Gastrocnemius medialis (tissue), 4 donors: ENCODE measurements at regions of chr9 and their contacts with region 1.

Region 1: GRCh38 chr9:2559212-2560152 is 62.1 kb upstream of the VLDLR start:
- DNase-seq: peak; percentile 59 to 81
- ATAC-seq: peak; percentile 99 to 100
- H3K4me3 ChIP-seq: no peak overlapping the region
- H3K27ac ChIP-seq: peak overlapping the region; percentile 20 to 63 (median 44)
- H3K4me1 ChIP-seq: peaks cover 24% of the 10 kb centered on the region in 2 donors
- H3K27me3 ChIP-seq: no peaks in the 10 kb centered on the region
- CTCF ChIP-seq: no peak
- POLR2A ChIP-seq: no peak

Region 2: GRCh38 chr9:2494562-2494961 is 64.9 kb before region 1 on chr9:
- in situ Hi-C with region 1: no loop called
- intact Hi-C with region 1: loop called (anchors 2 kb)
- DNase-seq: no peak
- ATAC-seq: no peak
- H3K4me3 ChIP-seq: no peak overlapping the region
- H3K27ac ChIP-seq: peak overlapping the region in 1 of 4 donors; percentile 10
- H3K4me1 ChIP-seq: peaks cover 16 to 29% of the 10 kb centered on the region in 2 donors
- H3K27me3 ChIP-seq: no peaks in the 10 kb centered on the region
- CTCF ChIP-seq: no peak
- POLR2A ChIP-seq: no peak